GM12878 (cell line): ENCODE measurements at regions of chr1 and their contacts with region 1.

Region 1: GRCh38 chr1:165738794-165739193 is 29.9 kb downstream of the TMCO1 start:
- DNase-seq: no peak
- ATAC-seq: peak; percentile 73
- H3K4me3 ChIP-seq: no peak overlapping the region
- H3K27ac ChIP-seq: no peak overlapping the region
- H3K4me1 ChIP-seq: peaks cover 12% of the 10 kb centered on the region
- H3K27me3 ChIP-seq: no peaks in the 10 kb centered on the region
- CTCF ChIP-seq: no peak
- EP300 ChIP-seq: no peak
- POLR2A ChIP-seq: no peak
- RAD21 ChIP-seq: no peak

Region 2: DNA sequence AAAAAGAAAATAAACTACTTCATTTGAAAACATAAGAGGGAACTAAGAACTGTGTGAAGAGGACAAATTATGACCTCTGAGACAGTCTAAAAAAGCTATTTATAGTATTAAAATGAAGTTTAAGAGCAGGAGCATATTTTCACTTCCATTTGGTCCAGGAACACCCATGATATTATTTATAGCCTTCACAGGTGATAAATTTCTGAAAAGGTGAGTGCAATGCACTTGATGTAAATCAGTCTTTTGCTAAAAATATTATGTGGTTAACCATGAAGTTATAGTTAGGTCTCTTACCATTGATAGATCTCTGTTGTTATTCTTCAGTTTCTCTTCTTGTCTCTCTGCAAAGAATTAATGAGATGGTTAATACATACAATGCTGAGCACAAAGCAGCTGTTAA is 15.1 kb after region 1 on chr1:
- CTCF ChIA-PET with region 1: interaction called, 3 read pairs
- POLR2A ChIA-PET with region 1: interaction called, 3 read pairs
- RAD21 ChIA-PET with region 1: no interaction called
- SMC1A ChIA-PET with region 1: interaction called, 10 read pairs
- in situ Hi-C with region 1: no loop called
- intact Hi-C with region 1: no loop called
- DNase-seq: peak; percentile 31
- ATAC-seq: peak; percentile 77
- H3K4me3 ChIP-seq: no peak overlapping the region
- H3K27ac ChIP-seq: no peak overlapping the region
- H3K4me1 ChIP-seq: peaks cover 10% of the 10 kb centered on the region
- H3K27me3 ChIP-seq: no peaks in the 10 kb centered on the region
- CTCF ChIP-seq: no peak
- EP300 ChIP-seq: no peak
- POLR2A ChIP-seq: no peak
- RAD21 ChIP-seq: no peak

Region 3: GRCh38 chr1:165836664-165837482 is 98.1 kb after region 1 on chr1:
- CTCF ChIA-PET with region 1: no interaction called
- POLR2A ChIA-PET with region 1: no interaction called
- RAD21 ChIA-PET with region 1: no interaction called
- SMC1A ChIA-PET with region 1: no interaction called
- in situ Hi-C with region 1: no loop called
- intact Hi-C with region 1: no loop called
- DNase-seq: no peak
- ATAC-seq: no peak
- H3K4me3 ChIP-seq: no peak overlapping the region
- H3K27ac ChIP-seq: no peak overlapping the region; the same call in 1 of the 2 replicates
- H3K4me1 ChIP-seq: peaks cover 14% of the 10 kb centered on the region
- H3K27me3 ChIP-seq: no peaks in the 10 kb centered on the region
- CTCF ChIP-seq: no peak
- EP300 ChIP-seq: no peak
- POLR2A ChIP-seq: no peak
- RAD21 ChIP-seq: no peak